ENCODE measurements at regions of chr1 and their contacts with region 1.

Region 1: GRCh38 chr1:26500488-26501175 is 28.4 kb downstream of the HMGN2 start:
- DNase-seq: peak; percentile 92
- H3K4me3 ChIP-seq: peak overlapping the region; percentile 60 to 68 (median 63)
- H3K27ac ChIP-seq: peak overlapping the region; percentile 85 to 96 (median 89)
- H3K4me1 ChIP-seq: peaks cover 3 to 17% (median 9%) of the 10 kb centered on the region in 4 donors
- H3K27me3 ChIP-seq: no peaks in the 10 kb centered on the region
- CTCF ChIP-seq: no peak
- EP300 ChIP-seq: no peak
- POLR2A ChIP-seq: no peak

Region 2: DNA sequence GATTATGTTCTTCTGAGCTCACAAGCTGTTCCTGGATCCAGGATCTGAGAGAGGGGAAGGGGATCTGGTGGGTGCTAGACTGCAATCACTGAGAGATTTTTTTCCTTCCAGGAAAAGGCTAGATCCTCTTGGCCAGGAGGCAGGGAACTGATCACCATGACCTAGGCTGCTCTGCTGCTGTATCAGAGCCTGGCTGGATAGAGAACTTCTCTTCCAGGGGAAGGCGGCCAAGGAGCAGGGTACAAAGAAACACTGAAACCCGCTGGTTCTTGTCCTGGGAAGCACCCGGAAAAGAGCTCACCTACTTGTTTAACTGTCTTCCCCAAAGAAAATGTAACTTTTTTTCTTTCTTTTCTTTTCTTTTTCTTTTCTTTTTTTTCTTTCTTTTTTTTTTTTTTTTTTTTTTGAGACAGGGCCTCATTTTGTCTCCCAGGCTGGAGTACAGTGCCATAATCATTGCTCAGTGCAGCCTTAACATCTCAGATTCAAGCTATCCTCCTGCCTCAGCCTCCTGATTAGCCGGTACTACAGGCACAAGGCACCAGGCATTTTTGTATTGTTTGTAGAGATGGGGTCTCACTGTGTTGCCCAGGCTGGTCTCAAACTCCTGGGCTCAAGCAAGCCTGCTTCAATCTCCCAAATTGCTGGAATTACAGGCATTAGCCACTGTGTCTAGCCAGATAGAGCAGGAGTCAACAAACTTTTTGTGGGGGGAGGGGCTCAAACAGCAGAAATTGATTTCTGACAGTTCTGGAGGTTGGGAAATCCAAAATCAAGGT is 16.5 kb after region 1 on chr1:
- intact Hi-C with region 1: no loop called
- DNase-seq: no peak
- H3K4me3 ChIP-seq: no peak overlapping the region
- H3K27ac ChIP-seq: no peak overlapping the region
- H3K4me1 ChIP-seq: no peaks in the 10 kb centered on the region
- H3K27me3 ChIP-seq: no peaks in the 10 kb centered on the region
- CTCF ChIP-seq: no peak
- EP300 ChIP-seq: no peak
- POLR2A ChIP-seq: no peak

Region 3: DNA sequence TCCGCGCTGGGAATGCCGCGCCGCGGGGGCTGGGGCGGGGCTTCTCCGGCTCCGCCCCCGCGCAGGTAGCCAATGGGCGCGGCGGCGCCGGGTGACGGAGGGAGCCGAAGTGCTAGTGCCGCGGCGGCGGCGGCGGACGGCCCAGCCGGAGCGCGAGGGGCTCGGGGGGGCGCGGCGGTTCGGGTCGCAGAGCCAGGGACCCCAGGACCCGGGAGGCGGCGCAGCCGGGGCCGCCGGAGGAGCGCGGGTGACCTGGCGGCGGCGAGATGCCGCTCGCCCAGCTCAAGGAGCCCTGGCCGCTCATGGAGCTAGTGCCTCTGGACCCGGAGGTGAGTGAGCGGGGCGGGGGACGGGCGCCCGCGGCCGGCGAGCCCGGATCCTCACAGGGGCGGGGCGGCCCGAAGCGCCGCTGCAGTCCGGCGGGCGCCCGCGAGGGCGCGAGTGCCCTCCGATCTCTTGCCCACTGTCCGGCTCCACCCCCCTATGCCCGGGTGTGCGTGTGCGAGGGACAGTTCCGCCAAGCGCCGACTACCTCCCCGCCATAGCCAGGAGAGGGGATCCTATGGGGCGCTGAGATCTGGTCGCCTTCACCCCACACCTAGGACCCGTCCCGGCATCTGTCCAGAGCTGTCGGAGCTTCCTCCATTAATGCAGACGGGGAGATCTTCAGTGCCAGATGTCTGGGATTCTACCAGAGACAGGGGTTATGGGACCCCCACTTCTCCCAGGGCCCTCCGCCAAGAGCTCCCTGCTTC is 29.2 kb after region 1 on chr1 and contains the start of gene RPS6KA1:
- intact Hi-C with region 1: loop called (anchors 1 kb)
- DNase-seq: no peak
- H3K4me3 ChIP-seq: peak within 1 kb of the TSS; percentile 30 to 77 (median 65)
- H3K27ac ChIP-seq: peak within 1 kb of the TSS; percentile 32 to 60 (median 48)
- H3K4me1 ChIP-seq: peaks cover 0 to 6% (median 5%) of the 10 kb centered on the region in 4 donors
- H3K27me3 ChIP-seq: peaks cover 0 to 17% (median 0%) of the 10 kb centered on the region in 3 donors
- CTCF ChIP-seq: no peak
- EP300 ChIP-seq: no peak
- POLR2A ChIP-seq: no peak
- total RNA-seq, gene RPS6KA1: 2.5 to 11.5 (median 6.8) TPM

Measured in sigmoid colon (tissue), 7 donors.